Activated T-helper 1 cell treated with anti-CD3 and anti-CD28 coated beads, Interleukin-12 subunit alpha, Interleukin-12 subunit beta, Interleukin-2, Interleukin-4 antibody, amounts not matched to agents 30 ng/mL and 10 ng/mL and 1 ng/mL, durations not matched to agents 14 hours and 24 hours and 36 hours (primary cell): ENCODE measurements at regions of chr7 and their contacts with region 1.

Region 1: DNA sequence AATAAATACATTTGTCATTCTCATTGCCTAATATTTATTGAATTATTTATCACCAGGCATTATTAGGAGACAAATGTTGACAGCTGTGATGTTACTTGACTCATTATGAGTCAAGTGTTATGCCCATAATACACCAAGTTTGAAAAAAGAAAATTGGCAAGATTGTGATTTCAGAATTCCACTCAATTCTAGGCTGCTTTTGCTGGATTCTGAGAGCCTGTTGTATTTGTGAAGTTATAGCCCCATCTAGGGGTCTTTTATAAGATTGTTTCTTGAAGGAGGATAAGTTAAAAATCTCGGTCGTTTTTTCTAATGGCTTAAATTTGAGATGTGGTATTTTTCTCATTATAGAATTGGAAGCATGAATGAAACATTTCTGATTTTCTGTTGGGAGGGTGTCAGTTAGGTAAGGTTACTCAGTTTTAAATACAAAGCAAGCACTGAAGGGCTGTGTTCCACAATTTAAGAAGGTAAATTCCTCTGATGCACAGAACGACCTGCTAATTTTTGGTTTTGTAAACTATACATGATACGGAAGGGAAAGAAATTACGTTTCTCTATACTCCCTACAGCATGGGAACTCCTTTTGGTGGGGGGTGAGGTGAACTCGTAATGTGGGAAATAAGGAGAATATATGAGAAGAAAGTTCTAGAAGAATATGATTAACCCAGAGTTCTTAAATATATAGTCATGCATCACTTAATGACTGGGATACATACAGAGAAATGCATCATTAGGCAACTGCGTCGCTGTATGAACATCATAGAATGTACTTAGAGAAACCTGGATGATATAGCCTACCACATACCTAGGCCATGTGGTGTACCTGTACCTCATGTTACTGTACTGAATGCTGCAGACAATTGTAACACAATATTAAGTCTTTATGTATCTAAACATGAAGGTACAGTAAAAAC is 2.6 kb downstream of the STK31 start:
- DNase-seq: no peak
- H3K4me3 Mint-ChIP-seq: no peak overlapping the region
- H3K27ac Mint-ChIP-seq: no peak overlapping the region
- H3K4me1 Mint-ChIP-seq: no peaks in the 10 kb centered on the region
- H3K27me3 Mint-ChIP-seq: peaks cover 3% of the 10 kb centered on the region

Region 2: GRCh38 chr7:23570592-23571200 is 141.9 kb before region 1 on chr7:
- intact Hi-C with region 1: loop called (anchors 1 kb)
- DNase-seq: peak; percentile 48
- H3K4me3 Mint-ChIP-seq: no peak overlapping the region
- H3K27ac Mint-ChIP-seq: no peak overlapping the region
- H3K4me1 Mint-ChIP-seq: peaks cover 5% of the 10 kb centered on the region
- H3K27me3 Mint-ChIP-seq: peaks cover 6% of the 10 kb centered on the region

Region 3: GRCh38 chr7:23654508-23654907 is 58.1 kb before region 1 on chr7:
- intact Hi-C with region 1: loop called (anchors 1 kb)
- DNase-seq: no peak
- H3K4me3 Mint-ChIP-seq: no peak overlapping the region
- H3K27ac Mint-ChIP-seq: no peak overlapping the region
- H3K4me1 Mint-ChIP-seq: no peaks in the 10 kb centered on the region
- H3K27me3 Mint-ChIP-seq: peaks cover 1% of the 10 kb centered on the region

Region 4: GRCh38 chr7:24764972-24765744 is 1052.5 kb after region 1 on chr7:
- intact Hi-C with region 1: no loop called
- DNase-seq: no peak
- H3K4me3 Mint-ChIP-seq: no peak overlapping the region
- H3K27ac Mint-ChIP-seq: no peak overlapping the region
- H3K4me1 Mint-ChIP-seq: peaks cover 26% of the 10 kb centered on the region
- H3K27me3 Mint-ChIP-seq: peaks cover 26% of the 10 kb centered on the region